ENCODE measurements at regions of chr17 and their contacts with region 1.

Region 1: GRCh38 chr17:13002766-13003451 is 14.9 kb downstream of the ELAC2 start:
- DNase-seq: peak; percentile 43
- ATAC-seq: peak; percentile 56
- H3K4me3 Mint-ChIP-seq: no peak overlapping the region
- H3K27ac Mint-ChIP-seq: no peak overlapping the region
- H3K4me1 Mint-ChIP-seq: no peaks in the 10 kb centered on the region
- H3K27me3 Mint-ChIP-seq: no peaks in the 10 kb centered on the region
- CTCF ChIP-seq: no peak

Region 2: GRCh38 chr17:12744298-12744697 is 258.6 kb before region 1 on chr17:
- CTCF ChIA-PET with region 1: interaction called, 9 read pairs
- POLR2A ChIA-PET with region 1: no interaction called
- intact Hi-C with region 1: loop called (anchors 1 kb)
- DNase-seq: no peak
- ATAC-seq: no peak
- H3K4me3 Mint-ChIP-seq: no peak overlapping the region
- H3K27ac Mint-ChIP-seq: no peak overlapping the region
- H3K4me1 Mint-ChIP-seq: no peaks in the 10 kb centered on the region
- H3K27me3 Mint-ChIP-seq: peaks cover 4% of the 10 kb centered on the region
- CTCF ChIP-seq: no peak

Region 3: GRCh38 chr17:12928741-12929140 is 74.2 kb before region 1 on chr17:
- CTCF ChIA-PET with region 1: no interaction called
- POLR2A ChIA-PET with region 1: no interaction called
- intact Hi-C with region 1: loop called (anchors 1 kb)
- DNase-seq: no peak
- ATAC-seq: no peak
- H3K4me3 Mint-ChIP-seq: no peak overlapping the region
- H3K27ac Mint-ChIP-seq: no peak overlapping the region
- H3K4me1 Mint-ChIP-seq: no peaks in the 10 kb centered on the region
- H3K27me3 Mint-ChIP-seq: no peaks in the 10 kb centered on the region
- CTCF ChIP-seq: no peak

Region 4: GRCh38 chr17:13031718-13032350 is 28.9 kb after region 1 on chr17:
- CTCF ChIA-PET with region 1: interaction called, 10 read pairs
- POLR2A ChIA-PET with region 1: no interaction called
- intact Hi-C with region 1: no loop called
- DNase-seq: no peak
- ATAC-seq: peak; percentile 84
- H3K4me3 Mint-ChIP-seq: no peak overlapping the region
- H3K27ac Mint-ChIP-seq: no peak overlapping the region
- H3K4me1 Mint-ChIP-seq: peaks cover 3% of the 10 kb centered on the region
- H3K27me3 Mint-ChIP-seq: peaks cover 4% of the 10 kb centered on the region
- CTCF ChIP-seq: peak; percentile 54

Region 5: GRCh38 chr17:13044572-13045065 is 41.7 kb after region 1 on chr17:
- CTCF ChIA-PET with region 1: no interaction called
- POLR2A ChIA-PET with region 1: no interaction called
- intact Hi-C with region 1: no loop called
- DNase-seq: no peak
- ATAC-seq: no peak
- H3K4me3 Mint-ChIP-seq: no peak overlapping the region
- H3K27ac Mint-ChIP-seq: no peak overlapping the region
- H3K4me1 Mint-ChIP-seq: no peaks in the 10 kb centered on the region
- H3K27me3 Mint-ChIP-seq: peaks cover 8% of the 10 kb centered on the region
- CTCF ChIP-seq: no peak

Measured in activated B cell treated with CpG ODN at 0.5 μM for 24 hours (primary cell).